Ascending aorta (tissue), 2 donors: ENCODE measurements at regions of chr1 and their contacts with region 1.

Region 1: DNA sequence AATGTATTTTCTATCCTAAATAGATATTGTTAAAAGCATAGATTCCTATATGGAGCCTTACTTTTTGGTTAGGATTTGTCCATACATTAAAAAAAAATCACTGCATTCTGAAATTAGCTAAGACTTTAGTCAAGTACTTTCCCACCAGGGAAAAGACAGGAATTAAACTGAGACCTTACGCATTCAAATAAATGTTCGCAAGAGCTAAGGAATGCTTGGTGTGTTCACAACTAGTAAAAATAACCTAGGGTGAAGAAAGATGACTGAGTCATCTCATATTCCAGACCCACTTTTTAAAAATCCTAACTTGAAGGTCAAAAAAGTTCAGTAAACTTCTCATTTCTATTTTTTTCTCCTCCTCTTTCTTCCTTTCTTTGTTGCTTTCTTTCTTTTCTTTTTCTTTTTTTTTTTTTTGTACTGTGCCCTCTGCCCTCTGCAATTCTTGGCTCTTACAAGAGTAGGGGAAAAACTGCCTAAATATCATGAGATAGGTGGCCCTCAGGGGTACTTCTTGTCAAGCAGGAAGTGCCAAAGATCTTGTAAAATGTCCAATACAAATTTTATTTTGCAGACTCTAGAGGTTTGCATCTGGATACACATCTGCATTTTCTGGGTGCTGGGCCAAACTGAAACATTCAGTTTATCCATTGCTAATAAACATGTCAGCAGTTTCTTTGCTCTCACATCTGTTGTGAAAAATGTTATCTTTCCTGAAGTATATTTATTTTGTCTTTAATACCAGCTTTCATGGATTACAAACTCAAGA is 121.4 kb upstream of the GORAB start:
- DNase-seq: no peak
- H3K4me3 ChIP-seq: no peak overlapping the region
- H3K27ac ChIP-seq: peak overlapping the region; percentile 85 to 90
- H3K4me1 ChIP-seq: peaks cover 3 to 27% of the 10 kb centered on the region in 2 donors
- H3K27me3 ChIP-seq: no peaks in the 10 kb centered on the region
- CTCF ChIP-seq: no peak

Region 2: DNA sequence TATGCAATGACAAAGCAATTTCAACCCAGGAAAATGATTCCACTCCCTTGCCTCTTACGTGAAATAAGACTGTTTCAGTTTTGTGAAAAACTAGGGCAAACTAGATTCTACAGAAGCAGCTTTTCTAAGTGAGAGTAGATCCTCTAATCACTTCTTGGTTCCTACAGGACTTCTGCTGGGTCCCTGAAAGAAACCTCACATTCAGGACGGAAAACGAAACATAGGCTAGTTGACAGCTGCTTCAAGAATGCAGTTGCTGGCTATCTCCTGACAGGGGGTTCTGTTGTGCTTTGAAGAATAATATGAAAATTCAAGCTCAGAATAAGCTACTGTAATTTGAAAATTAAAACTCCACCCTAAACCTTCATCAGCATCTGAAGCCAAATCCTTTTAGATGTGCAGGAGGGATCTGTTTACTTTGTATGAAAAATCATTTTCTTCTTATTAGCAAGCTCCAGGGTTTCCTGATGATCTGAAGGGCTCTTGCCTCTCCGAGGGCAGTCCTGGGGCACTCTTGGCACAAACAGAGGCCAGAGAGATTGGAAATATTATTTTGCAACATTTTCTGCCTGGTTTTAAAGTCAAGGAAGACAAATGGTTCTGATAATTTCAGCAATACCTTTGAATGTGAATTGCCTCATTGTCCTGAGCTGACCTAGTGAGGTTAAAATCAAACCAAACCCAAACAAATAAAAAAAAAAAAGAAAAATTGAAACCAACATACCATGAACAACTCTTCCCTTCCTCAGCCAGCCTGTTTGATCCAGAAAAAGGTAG is 209.8 kb before region 1 on chr1:
- intact Hi-C with region 1: loop called (anchors 5 kb)
- DNase-seq: no peak
- H3K4me3 ChIP-seq: peak overlapping the region in 1 of 2 donors; percentile 26
- H3K27ac ChIP-seq: peak overlapping the region; percentile 36 to 57
- H3K4me1 ChIP-seq: peaks cover 0 to 17% of the 10 kb centered on the region in 2 donors
- H3K27me3 ChIP-seq: no peaks in the 10 kb centered on the region
- CTCF ChIP-seq: no peak

Region 3: GRCh38 chr1:170377896-170378634 is 32.5 kb before region 1 on chr1:
- intact Hi-C with region 1: no loop called
- DNase-seq: no peak
- H3K4me3 ChIP-seq: no peak overlapping the region
- H3K27ac ChIP-seq: peak overlapping the region in 1 of 2 donors; percentile 15
- H3K4me1 ChIP-seq: peaks cover 0 to 14% of the 10 kb centered on the region in 2 donors
- H3K27me3 ChIP-seq: no peaks in the 10 kb centered on the region
- CTCF ChIP-seq: no peak

Region 4: GRCh38 chr1:170634293-170634692 is 223.7 kb after region 1 on chr1:
- intact Hi-C with region 1: no loop called
- DNase-seq: no peak
- H3K4me3 ChIP-seq: no peak overlapping the region
- H3K27ac ChIP-seq: no peak overlapping the region
- H3K4me1 ChIP-seq: no peaks in the 10 kb centered on the region
- H3K27me3 ChIP-seq: no peaks in the 10 kb centered on the region
- CTCF ChIP-seq: no peak